HepG2 (cell line): ENCODE measurements at regions of chr12 and their contacts with region 1.

Region 1: DNA sequence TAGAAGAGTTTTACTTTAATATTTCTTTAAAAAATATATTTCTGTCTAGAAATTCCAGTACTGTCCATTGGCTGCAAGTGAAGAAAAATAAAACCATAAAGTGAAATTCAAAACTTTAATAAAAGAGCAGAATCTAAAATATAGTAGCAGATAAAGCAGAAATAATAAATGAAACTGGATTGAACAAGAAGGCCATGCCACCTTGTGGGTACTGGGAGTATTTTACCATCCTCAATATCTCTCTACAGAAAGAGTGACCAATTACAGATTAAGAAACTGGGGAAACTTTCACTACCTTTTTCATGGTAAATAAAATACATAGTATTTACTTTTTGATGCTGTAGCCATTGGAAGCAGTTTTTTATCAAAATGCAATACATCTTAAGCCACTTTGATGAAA is 220.5 kb downstream of the BCAT1 start:
- DNase-seq: peak; percentile 18
- ATAC-seq: no peak
- H3K4me3 ChIP-seq: no peak overlapping the region
- H3K27ac ChIP-seq: no peak overlapping the region
- H3K4me1 ChIP-seq: no peaks in the 10 kb centered on the region
- H3K27me3 ChIP-seq: no peaks in the 10 kb centered on the region
- CTCF ChIP-seq: 0 out of 2 replicates have a peak, but pooled peaks have one; percentile 24
- EP300 ChIP-seq: no peak
- POLR2A ChIP-seq: no peak
- RAD21 ChIP-seq: no peak

Region 2: GRCh38 chr12:24596768-24597388 is 131.5 kb before region 1 on chr12:
- CTCF ChIA-PET with region 1: interaction called, 3 read pairs
- POLR2A ChIA-PET with region 1: no interaction called
- in situ Hi-C with region 1: no loop called
- intact Hi-C with region 1: loop called (anchors 1 kb)
- DNase-seq: peak; percentile 24
- ATAC-seq: no peak
- H3K4me3 ChIP-seq: no peak overlapping the region
- H3K27ac ChIP-seq: no peak overlapping the region
- H3K4me1 ChIP-seq: no peaks in the 10 kb centered on the region
- H3K27me3 ChIP-seq: no peaks in the 10 kb centered on the region; a peak in 1 of 5 replicates
- CTCF ChIP-seq: peak; percentile 71
- EP300 ChIP-seq: no peak
- POLR2A ChIP-seq: no peak
- RAD21 ChIP-seq: no peak

Region 3: DNA sequence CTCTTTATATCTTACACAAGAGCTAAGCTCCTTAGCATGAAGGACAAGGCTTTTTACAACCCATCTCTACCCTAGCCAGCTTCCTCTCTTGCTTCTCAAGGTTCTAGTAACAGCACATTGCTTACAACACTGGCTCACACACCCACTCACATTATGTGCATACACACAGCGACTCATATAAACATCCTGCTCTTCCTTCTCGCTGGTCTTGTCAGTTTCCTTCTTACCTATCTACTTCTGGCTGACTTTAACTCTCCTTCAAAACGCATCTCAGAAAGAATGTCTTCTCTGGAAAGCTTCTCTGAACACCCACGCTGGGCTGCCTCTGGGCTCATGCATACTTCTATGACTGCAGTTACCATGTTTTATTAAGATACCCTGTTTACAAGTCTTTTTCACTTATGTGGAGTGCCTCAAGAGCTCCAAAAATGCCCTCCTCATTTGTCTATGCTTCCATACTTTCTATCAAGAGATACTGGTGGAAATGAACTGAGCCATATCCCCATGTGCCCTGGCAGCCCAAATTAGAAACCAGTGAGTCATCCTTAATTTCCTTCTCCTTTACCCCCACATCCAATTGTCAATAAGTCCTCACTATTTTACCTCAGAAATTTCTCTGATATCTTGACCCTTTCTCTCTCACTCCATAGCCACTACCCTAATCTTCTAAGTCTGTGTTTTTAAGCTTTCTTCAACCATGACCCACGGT is 649.3 kb after region 1 on chr12:
- CTCF ChIA-PET with region 1: no interaction called
- POLR2A ChIA-PET with region 1: no interaction called
- in situ Hi-C with region 1: no loop called
- intact Hi-C with region 1: loop called (anchors 10 kb)
- DNase-seq: no peak
- ATAC-seq: no peak
- H3K4me3 ChIP-seq: no peak overlapping the region
- H3K27ac ChIP-seq: no peak overlapping the region
- H3K4me1 ChIP-seq: no peaks in the 10 kb centered on the region
- H3K27me3 ChIP-seq: peaks cover 4 to 7% of the 10 kb centered on the region in 2 experiments; a peak in 3 of 5 replicates
- CTCF ChIP-seq: no peak
- EP300 ChIP-seq: no peak
- POLR2A ChIP-seq: no peak
- RAD21 ChIP-seq: no peak